ENCODE measurements at regions of chr21 and their contacts with region 1.

Region 1: GRCh38 chr21:17780539-17780938 is 38.6 kb downstream of the C21orf91 start:
- DNase-seq: peak; percentile 51
- ATAC-seq: peak; percentile 20
- H3K4me3 Mint-ChIP-seq: peak overlapping the region; percentile 3
- H3K27ac Mint-ChIP-seq: peak overlapping the region; percentile 73
- H3K4me1 Mint-ChIP-seq: peaks cover 87% of the 10 kb centered on the region
- H3K27me3 Mint-ChIP-seq: no peaks in the 10 kb centered on the region

Region 2: GRCh38 chr21:17611414-17612022 is 169.0 kb before region 1 on chr21:
- CTCF ChIA-PET with region 1: no interaction called
- POLR2A ChIA-PET with region 1: no interaction called
- intact Hi-C with region 1: loop called (anchors 1 to 5 kb)
- DNase-seq: peak; percentile 91
- ATAC-seq: peak; percentile 64
- H3K4me3 Mint-ChIP-seq: peak overlapping the region; percentile 75
- H3K27ac Mint-ChIP-seq: peak overlapping the region; percentile 94
- H3K4me1 Mint-ChIP-seq: peaks cover 35% of the 10 kb centered on the region
- H3K27me3 Mint-ChIP-seq: no peaks in the 10 kb centered on the region

Region 3: DNA sequence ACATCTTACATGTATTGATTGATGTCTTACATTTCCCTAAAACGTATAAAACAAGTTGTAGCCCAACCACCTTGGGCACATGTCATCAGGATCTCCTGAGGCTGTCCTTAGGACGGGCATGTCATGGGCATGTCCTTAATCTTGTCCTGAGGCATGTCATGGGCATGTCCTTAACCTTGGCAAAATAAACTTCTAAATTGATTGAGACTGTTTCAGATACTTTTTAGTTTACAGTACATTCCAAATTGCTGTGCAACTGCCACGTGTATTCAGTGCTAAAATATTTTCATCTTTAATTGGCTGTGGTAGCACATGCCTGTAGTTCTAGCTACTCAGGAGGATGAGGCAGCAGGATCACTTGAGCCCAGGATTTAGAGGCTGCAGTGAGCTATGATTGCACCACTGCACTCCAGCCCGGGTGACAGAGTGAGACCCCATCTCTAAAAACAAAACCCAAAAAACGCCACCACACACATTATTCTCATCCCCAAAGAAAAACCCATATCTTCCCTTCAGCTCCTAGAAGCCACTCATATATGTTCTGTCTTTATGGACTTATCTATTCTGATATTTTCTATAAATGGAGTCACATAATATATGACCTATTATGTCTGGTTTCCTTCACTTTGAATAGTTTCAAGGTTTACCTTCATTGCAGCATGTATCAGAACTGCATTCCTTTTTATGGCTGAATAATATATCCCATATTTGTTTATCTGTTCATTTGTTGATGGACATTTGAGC is 71.8 kb before region 1 on chr21:
- CTCF ChIA-PET with region 1: no interaction called
- POLR2A ChIA-PET with region 1: no interaction called
- intact Hi-C with region 1: loop called (anchors 2 to 10 kb)
- DNase-seq: no peak
- ATAC-seq: no peak
- H3K4me3 Mint-ChIP-seq: no peak overlapping the region
- H3K27ac Mint-ChIP-seq: no peak overlapping the region
- H3K4me1 Mint-ChIP-seq: peaks cover 13% of the 10 kb centered on the region
- H3K27me3 Mint-ChIP-seq: peaks cover 3% of the 10 kb centered on the region

Region 4: DNA sequence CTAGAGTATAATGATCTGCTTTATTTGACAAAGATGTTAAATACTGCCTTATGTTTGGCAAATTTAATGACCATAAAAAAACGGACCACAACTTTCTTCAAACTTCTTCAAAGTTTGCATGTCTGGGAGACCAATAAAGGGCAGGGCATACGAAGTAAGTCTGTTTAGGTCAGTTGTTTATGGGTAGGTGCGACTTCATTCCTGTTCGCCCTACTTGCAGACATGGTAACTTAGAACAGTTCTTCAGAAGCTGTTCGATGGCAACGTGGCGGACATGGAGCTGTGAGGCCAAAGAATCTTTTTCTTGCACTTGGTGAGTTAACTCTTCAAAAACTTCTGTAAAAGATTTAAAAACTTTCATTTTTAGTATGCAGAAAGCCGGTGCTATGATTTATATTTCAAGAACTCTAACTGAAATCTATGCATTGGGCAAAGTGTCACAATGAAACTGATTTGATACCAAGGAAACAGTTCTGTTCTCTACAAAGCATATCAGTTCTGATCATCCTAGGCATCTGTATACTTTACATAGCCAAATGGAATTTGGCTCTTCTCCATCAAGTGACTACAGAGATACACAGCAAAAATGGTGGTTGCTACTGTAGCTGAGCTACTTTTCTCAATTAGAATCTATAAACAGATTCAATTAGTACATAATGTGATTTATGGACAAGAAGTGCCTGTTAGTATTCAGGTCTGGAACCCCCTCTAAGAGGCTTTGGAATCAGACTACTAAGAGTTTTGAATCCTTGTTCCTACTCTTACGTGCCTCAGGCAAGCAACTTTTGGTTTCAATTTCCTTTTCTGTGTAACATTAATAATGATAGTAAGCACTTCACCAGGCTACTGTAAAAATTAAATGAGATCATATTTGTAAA is 12.9 kb after region 1 on chr21:
- CTCF ChIA-PET with region 1: interaction called, 8 read pairs
- POLR2A ChIA-PET with region 1: interaction called, 4 read pairs
- intact Hi-C with region 1: loop called (anchors 1 kb)
- DNase-seq: no peak
- ATAC-seq: peak; percentile 64
- H3K4me3 Mint-ChIP-seq: peak overlapping the region; percentile 60
- H3K27ac Mint-ChIP-seq: peak overlapping the region; percentile 83
- H3K4me1 Mint-ChIP-seq: peaks cover 66% of the 10 kb centered on the region
- H3K27me3 Mint-ChIP-seq: no peaks in the 10 kb centered on the region

Region 5: DNA sequence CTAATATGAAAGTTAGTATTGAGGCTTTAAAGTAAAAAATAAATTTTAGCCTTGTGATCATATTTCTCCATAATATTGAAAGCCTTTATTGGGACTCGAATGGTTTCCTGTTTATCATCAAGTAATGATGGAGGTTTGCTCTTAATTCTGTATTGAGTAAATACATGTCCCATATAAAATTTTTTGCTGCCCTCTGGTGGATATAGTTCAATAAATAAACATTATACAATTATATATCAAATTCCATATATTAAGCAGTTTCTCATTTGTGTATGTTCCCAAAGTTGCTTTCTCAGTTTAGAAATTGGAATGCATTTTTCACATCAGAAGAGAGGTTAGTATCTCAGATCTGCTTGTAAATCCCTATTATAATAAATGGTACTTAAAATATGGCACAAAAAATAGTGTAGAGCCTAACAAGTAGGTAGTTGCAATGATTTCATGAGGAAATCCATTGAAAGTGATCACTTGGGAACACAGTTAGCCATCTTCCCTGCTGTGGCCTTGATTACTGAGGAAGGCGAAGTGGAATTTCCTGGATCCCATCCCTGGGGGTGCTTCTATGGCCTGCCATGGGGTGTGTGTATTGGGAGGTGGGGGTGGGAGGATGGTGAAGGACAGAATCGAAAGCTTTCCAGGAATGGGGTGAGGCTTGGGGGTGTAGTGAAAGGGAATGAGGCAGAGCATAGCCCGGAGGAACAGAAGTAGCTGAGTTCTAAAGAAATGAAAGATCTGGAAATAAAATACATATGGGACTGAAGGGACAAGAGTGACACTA is 122.7 kb after region 1 on chr21:
- CTCF ChIA-PET with region 1: interaction called, 3 read pairs
- POLR2A ChIA-PET with region 1: no interaction called
- intact Hi-C with region 1: loop called in 1 of 2 experiments (anchors 5 kb)
- DNase-seq: no peak
- ATAC-seq: no peak
- H3K4me3 Mint-ChIP-seq: no peak overlapping the region
- H3K27ac Mint-ChIP-seq: no peak overlapping the region
- H3K4me1 Mint-ChIP-seq: peaks cover 4% of the 10 kb centered on the region
- H3K27me3 Mint-ChIP-seq: no peaks in the 10 kb centered on the region

Measured in activated CD4-positive, alpha-beta T cell treated with anti-CD3 and anti-CD28 coated beads for 36 hours (primary cell).